IMR-90 (cell line): ENCODE measurements at regions of chr9 and their contacts with region 1.

Region 1: DNA sequence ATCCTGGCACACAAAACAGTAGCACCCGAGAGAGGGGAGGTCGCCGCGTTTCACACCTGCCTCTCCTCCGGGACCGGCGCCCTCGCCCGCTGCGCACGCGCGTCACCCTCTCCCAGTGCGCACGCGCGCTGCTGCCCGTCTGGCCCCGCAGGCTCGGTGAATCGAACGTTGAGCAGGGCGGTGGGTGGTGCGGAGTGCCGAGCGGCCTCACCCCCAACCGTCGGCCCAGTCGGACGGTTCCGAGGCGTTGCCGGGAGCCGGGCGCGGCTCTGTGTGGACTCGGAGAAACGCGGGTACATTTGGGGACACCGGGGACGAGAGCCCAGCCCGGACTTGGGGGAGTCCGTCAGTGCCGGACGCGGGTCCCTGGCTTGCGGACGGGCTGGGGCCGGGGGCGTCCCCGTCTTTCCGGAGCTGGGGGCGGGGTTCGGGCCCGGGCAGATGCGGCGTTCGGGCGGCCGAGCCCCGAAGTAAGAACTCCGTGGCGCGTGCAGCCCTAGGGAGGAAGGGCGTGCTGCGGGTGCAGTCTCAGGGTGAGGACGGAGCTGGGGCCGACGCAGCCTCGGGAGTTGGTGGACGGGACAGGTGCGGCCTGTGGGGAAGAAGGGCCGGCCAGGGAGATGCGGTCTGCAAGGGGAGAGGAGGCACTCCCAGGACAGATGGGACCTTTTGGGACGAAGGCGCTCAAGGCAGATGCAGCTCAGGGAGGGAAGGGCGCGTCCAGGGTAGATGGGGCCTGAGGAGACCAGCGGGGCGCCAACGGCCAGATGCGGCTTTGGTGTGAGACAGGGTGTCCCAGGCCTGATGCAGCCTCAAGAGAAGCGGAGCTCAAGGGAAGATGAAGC is at the start of gene POMT1:
- DNase-seq: peak; percentile 73
- ATAC-seq: peak; percentile 92
- H3K4me3 ChIP-seq: peak within 1 kb of the TSS; percentile 94
- H3K27ac ChIP-seq: peak within 1 kb of the TSS; percentile 73
- H3K4me1 ChIP-seq: peaks cover 7% of the 10 kb centered on the region; the same call in 1 of the 2 replicates
- H3K27me3 ChIP-seq: no peaks in the 10 kb centered on the region
- CTCF ChIP-seq: no peak
- POLR2A ChIP-seq: no peak
- RAD21 ChIP-seq: no peak
- total RNA-seq, gene POMT1: 24.2 and 25.0 TPM in 2 replicates

Region 2: DNA sequence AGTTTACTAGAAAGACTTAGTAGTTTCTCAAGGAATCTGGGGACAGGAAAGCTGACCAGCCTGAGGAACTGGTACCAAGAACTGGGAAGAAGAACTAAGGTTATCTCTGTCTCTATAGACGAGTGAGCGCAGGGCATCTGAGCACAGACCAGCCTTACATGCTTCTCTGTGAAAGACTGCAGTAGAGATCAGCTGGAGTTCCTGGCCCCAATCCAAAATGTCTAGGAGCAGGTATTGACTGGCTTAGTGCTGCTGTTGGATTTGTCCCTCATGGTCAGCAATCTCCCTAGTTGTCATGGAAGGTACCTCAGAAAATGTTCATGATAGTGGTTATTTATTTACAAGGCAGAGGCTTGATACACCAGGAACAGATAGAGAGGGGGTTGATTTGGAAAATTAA is 364.3 kb before region 1 on chr9:
- CTCF ChIA-PET with region 1: no interaction called
- POLR2A ChIA-PET with region 1: no interaction called
- dilution Hi-C with region 1: no loop called
- in situ Hi-C with region 1: no loop called
- intact Hi-C with region 1: no loop called
- DNase-seq: no peak
- ATAC-seq: no peak
- H3K4me3 ChIP-seq: no peak overlapping the region
- H3K27ac ChIP-seq: no peak overlapping the region
- H3K4me1 ChIP-seq: no peaks in the 10 kb centered on the region
- H3K27me3 ChIP-seq: no peaks in the 10 kb centered on the region
- CTCF ChIP-seq: no peak
- POLR2A ChIP-seq: no peak
- RAD21 ChIP-seq: no peak

Region 3: GRCh38 chr9:131237931-131238401 is 265.0 kb before region 1 on chr9:
- CTCF ChIA-PET with region 1: no interaction called
- POLR2A ChIA-PET with region 1: no interaction called
- dilution Hi-C with region 1: no loop called
- in situ Hi-C with region 1: no loop called
- intact Hi-C with region 1: no loop called
- DNase-seq: peak; percentile 88
- ATAC-seq: peak; percentile 95
- H3K4me3 ChIP-seq: no peak overlapping the region
- H3K27ac ChIP-seq: peak overlapping the region; percentile 26; the same call in 1 of the 2 replicates
- H3K4me1 ChIP-seq: peaks cover 7% of the 10 kb centered on the region
- H3K27me3 ChIP-seq: no peaks in the 10 kb centered on the region
- CTCF ChIP-seq: no peak
- POLR2A ChIP-seq: no peak
- RAD21 ChIP-seq: no peak

Region 4: GRCh38 chr9:131739980-131740648 is 237.1 kb after region 1 on chr9 and contains the start of gene RAPGEF1:
- CTCF ChIA-PET with region 1: no interaction called
- POLR2A ChIA-PET with region 1: no interaction called
- dilution Hi-C with region 1: no loop called
- in situ Hi-C with region 1: loop called (anchors 10 kb)
- intact Hi-C with region 1: loop called (anchors 5 kb)
- DNase-seq: no peak
- ATAC-seq: peak; percentile 84
- H3K4me3 ChIP-seq: peak within 1 kb of the TSS; percentile 81
- H3K27ac ChIP-seq: peak within 1 kb of the TSS; percentile 65
- H3K4me1 ChIP-seq: peaks cover 15% of the 10 kb centered on the region
- H3K27me3 ChIP-seq: no peaks in the 10 kb centered on the region
- CTCF ChIP-seq: peak; percentile 99
- POLR2A ChIP-seq: no peak
- RAD21 ChIP-seq: peak; percentile 88
- total RNA-seq, gene RAPGEF1: 13.1 and 13.3 TPM in 2 replicates

Region 5: DNA sequence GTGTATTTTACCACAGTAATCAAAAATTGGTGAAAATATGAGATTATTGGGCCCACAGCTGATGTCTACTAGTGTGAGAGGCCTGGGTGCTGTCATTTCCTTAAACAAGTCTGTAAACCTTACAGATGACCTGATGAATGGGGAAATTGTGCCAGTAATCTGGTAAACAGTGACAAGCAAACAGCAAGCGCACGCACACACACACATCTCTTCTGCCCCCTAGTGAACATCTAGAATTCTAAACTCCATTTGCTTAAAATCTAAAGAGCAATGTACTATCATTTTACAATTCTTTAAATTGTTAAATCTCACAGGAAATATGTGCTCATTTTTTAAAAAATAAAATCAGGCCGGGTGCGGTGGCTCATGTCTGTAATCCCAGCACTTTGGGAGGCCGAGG is 244.4 kb after region 1 on chr9:
- CTCF ChIA-PET with region 1: interaction called, 4 read pairs
- POLR2A ChIA-PET with region 1: no interaction called
- dilution Hi-C with region 1: no loop called
- in situ Hi-C with region 1: loop called (anchors 10 kb)
- intact Hi-C with region 1: loop called (anchors 5 kb)
- DNase-seq: peak; percentile 58
- ATAC-seq: peak; percentile 86
- H3K4me3 ChIP-seq: no peak overlapping the region
- H3K27ac ChIP-seq: no peak overlapping the region
- H3K4me1 ChIP-seq: no peaks in the 10 kb centered on the region
- H3K27me3 ChIP-seq: peaks cover 12% of the 10 kb centered on the region
- CTCF ChIP-seq: peak; percentile 68
- POLR2A ChIP-seq: no peak
- RAD21 ChIP-seq: peak; percentile 71